Sigmoid colon (tissue), 7 donors: ENCODE measurements at regions of chr17 and their contacts with region 1.

Region 1: DNA sequence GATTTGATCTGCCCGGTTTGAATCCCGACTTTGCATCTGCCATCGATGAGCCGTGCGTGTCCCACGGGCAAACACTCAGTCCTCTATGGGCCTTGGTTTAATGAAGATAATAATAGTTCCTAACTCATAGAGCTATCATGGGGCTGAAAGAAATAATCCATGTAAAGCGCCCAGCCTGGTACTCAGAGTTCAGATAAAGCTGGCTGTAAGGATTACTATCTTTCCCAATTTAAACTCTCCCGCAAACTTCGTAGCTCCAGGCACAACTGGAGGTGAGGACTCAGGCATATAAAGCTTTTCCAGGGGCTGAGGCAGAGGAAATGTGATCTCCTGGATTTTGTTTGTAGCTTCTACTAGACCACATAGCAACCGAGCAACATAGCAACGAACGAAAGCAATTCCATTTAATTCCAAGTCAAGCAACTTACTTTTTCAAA is 16.3 kb downstream of the ALOX15 start:
- DNase-seq: no peak
- H3K4me3 ChIP-seq: no peak overlapping the region
- H3K27ac ChIP-seq: no peak overlapping the region
- H3K4me1 ChIP-seq: peaks cover 0 to 11% (median 5%) of the 10 kb centered on the region in 4 donors
- H3K27me3 ChIP-seq: peaks cover 0 to under 1% (median 0%) of the 10 kb centered on the region in 3 donors
- CTCF ChIP-seq: no peak
- EP300 ChIP-seq: no peak
- POLR2A ChIP-seq: no peak

Region 2: DNA sequence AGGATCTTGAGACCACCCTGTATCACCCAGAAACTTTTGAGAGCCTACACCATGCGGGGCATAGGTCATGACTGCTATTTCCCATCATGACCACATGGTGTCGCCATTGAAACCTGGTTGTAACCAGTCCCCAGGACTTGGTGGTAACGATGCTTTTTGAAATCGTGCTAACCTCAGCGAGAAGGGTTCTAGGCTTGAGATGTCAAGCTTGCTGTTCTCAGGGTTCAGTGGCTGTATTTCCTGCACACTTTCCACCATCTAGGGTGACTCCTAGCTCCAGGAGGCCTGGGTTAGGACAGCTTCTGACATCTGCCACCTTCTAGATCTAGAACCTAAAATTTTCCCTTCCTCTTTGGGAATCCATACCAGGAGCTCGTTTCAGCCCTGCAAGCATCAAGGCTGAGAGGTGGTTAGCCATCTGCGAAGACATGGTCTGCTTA is 204.5 kb before region 1 on chr17:
- intact Hi-C with region 1: loop called (anchors 5 kb)
- DNase-seq: no peak
- H3K4me3 ChIP-seq: no peak overlapping the region
- H3K27ac ChIP-seq: no peak overlapping the region
- H3K4me1 ChIP-seq: peaks cover 0 to 4% (median 0%) of the 10 kb centered on the region in 4 donors
- H3K27me3 ChIP-seq: no peaks in the 10 kb centered on the region
- CTCF ChIP-seq: peak; percentile 40 to 75 (median 67)
- EP300 ChIP-seq: no peak
- POLR2A ChIP-seq: no peak

Region 3: GRCh38 chr17:4565209-4566141 is 59.7 kb before region 1 on chr17:
- intact Hi-C with region 1: loop called (anchors 1 kb)
- DNase-seq: peak; percentile 84
- H3K4me3 ChIP-seq: no peak overlapping the region
- H3K27ac ChIP-seq: no peak overlapping the region
- H3K4me1 ChIP-seq: peaks cover 0 to 7% (median 3%) of the 10 kb centered on the region in 4 donors
- H3K27me3 ChIP-seq: no peaks in the 10 kb centered on the region
- CTCF ChIP-seq: peak; percentile 42 to 76 (median 64)
- EP300 ChIP-seq: no peak
- POLR2A ChIP-seq: no peak